Endothelial cell of umbilical vein (primary cell): ENCODE measurements at regions of chr2 and their contacts with region 1.

Region 1: GRCh38 chr2:68751397-68752339 is 17.1 kb downstream of the ARHGAP25 start:
- DNase-seq: peak; percentile 91
- H3K4me3 ChIP-seq: no peak overlapping the region
- H3K27ac ChIP-seq: no peak overlapping the region
- H3K4me1 ChIP-seq: peaks cover 7% of the 10 kb centered on the region
- H3K27me3 ChIP-seq: peaks cover 0 to 4% of the 10 kb centered on the region in 2 experiments
- CTCF ChIP-seq: peak; percentile 88 to 92
- POLR2A ChIP-seq: no peak

Region 2: DNA sequence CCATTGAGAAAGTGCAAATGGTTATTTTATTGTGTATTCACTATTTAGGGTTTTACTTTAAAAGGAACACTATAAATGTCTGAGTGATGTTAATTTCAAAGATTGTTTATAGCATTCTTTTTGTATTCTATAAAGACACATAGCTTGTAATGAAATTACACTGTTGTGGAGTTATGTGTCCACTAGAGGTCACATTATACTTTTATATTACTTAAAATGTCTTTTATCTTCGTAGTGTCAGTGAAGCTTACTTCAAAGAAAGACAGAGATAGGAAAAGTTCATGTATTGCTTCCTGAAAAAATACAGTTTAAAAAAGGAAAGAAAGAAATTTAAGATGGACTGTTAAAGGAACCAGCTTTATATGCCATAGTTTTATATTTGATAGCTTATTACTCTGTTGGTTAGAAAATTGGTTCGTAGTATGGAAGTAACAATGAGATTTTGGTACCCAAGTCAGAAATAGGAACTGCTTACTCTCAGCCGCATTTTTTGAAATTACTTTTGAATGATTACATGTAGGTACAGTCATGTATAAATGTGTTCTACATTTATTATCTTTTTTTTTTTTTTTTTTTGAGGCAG is 263.8 kb before region 1 on chr2:
- CTCF ChIA-PET with region 1: interaction called, 10 read pairs
- POLR2A ChIA-PET with region 1: no interaction called
- dilution Hi-C with region 1: no loop called
- intact Hi-C with region 1: no loop called
- DNase-seq: peak; percentile 44
- H3K4me3 ChIP-seq: no peak overlapping the region
- H3K27ac ChIP-seq: no peak overlapping the region
- H3K4me1 ChIP-seq: peaks cover 2% of the 10 kb centered on the region
- H3K27me3 ChIP-seq: no peaks in the 10 kb centered on the region
- CTCF ChIP-seq: peak; percentile 11 to 21
- POLR2A ChIP-seq: no peak

Region 3: GRCh38 chr2:68766376-68766845 is 14.7 kb after region 1 on chr2:
- CTCF ChIA-PET with region 1: interaction called, 16 read pairs
- POLR2A ChIA-PET with region 1: no interaction called
- dilution Hi-C with region 1: no loop called
- intact Hi-C with region 1: no loop called
- DNase-seq: peak; percentile 41
- H3K4me3 ChIP-seq: no peak overlapping the region
- H3K27ac ChIP-seq: no peak overlapping the region
- H3K4me1 ChIP-seq: peaks cover 10% of the 10 kb centered on the region
- H3K27me3 ChIP-seq: peaks cover 0 to 5% of the 10 kb centered on the region in 2 experiments
- CTCF ChIP-seq: no peak
- POLR2A ChIP-seq: no peak

Region 4: GRCh38 chr2:68828887-68829708 is 77.4 kb after region 1 on chr2:
- CTCF ChIA-PET with region 1: interaction called, 23 read pairs
- POLR2A ChIA-PET with region 1: no interaction called
- dilution Hi-C with region 1: no loop called
- intact Hi-C with region 1: loop called (anchors 1 kb)
- DNase-seq: peak; percentile 99
- H3K4me3 ChIP-seq: no peak overlapping the region
- H3K27ac ChIP-seq: peak overlapping the region; percentile 70
- H3K4me1 ChIP-seq: peaks cover 43% of the 10 kb centered on the region
- H3K27me3 ChIP-seq: no peaks in the 10 kb centered on the region
- CTCF ChIP-seq: no peak
- POLR2A ChIP-seq: no peak

Region 5: DNA sequence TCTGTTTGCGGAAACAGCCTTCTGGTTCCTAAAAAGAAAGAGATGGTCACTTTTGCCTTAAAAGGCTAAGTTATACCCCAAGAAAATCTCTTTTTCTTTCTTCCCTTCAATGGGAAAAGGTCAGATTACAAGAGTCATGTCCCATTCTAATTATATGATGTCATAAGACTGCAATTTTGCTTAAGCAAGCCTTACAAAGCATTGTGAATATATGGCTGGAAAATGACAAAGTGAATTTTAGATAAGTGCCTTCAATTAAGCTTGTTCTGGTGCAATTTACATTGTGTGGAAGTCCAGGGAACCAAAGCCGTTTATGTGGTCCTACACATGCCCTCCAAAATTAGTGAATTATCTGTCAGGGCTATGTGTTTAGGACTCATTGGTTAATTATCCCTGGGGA is 127.1 kb after region 1 on chr2:
- CTCF ChIA-PET with region 1: interaction called, 22 read pairs
- POLR2A ChIA-PET with region 1: no interaction called
- dilution Hi-C with region 1: no loop called
- intact Hi-C with region 1: no loop called
- DNase-seq: peak; percentile 49
- H3K4me3 ChIP-seq: no peak overlapping the region
- H3K27ac ChIP-seq: peak overlapping the region; percentile 78
- H3K4me1 ChIP-seq: peaks cover 33% of the 10 kb centered on the region
- H3K27me3 ChIP-seq: no peaks in the 10 kb centered on the region
- CTCF ChIP-seq: no peak
- POLR2A ChIP-seq: peak; percentile 5

Region 6: DNA sequence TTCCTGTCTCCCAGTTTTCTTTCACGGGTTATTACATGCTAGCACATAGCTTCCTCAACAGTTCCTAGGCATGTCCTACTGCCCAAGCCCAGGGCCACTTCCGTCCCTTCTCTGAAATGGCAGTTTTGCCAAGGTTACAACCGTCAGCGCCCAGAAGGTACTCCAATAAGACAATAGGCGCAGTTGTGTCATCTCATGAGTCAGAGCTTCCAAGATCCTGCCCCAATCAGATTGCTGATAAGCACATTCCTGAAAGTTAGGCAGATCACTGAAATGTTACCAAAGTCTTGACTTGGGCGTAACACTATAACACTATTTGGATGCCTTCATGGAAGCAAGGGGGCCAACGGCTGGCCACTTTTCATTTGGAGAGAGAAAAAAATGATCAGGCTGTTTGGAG is 166.8 kb after region 1 on chr2:
- CTCF ChIA-PET with region 1: interaction called, 34 read pairs
- POLR2A ChIA-PET with region 1: no interaction called
- dilution Hi-C with region 1: no loop called
- intact Hi-C with region 1: no loop called
- DNase-seq: no peak
- H3K4me3 ChIP-seq: no peak overlapping the region
- H3K27ac ChIP-seq: no peak overlapping the region
- H3K4me1 ChIP-seq: peaks cover 5% of the 10 kb centered on the region
- H3K27me3 ChIP-seq: peaks cover 0 to 4% of the 10 kb centered on the region in 2 experiments
- CTCF ChIP-seq: no peak
- POLR2A ChIP-seq: no peak